ENCODE measurements at regions of chr9 and their contacts with region 1.

Region 1: GRCh38 chr9:125650271-125650737 is 56.7 kb downstream of the MAPKAP1 start:
- DNase-seq: no peak
- H3K4me3 Mint-ChIP-seq: peak overlapping the region; percentile 3
- H3K27ac Mint-ChIP-seq: peak overlapping the region; percentile 64
- H3K4me1 Mint-ChIP-seq: peaks cover 55% of the 10 kb centered on the region
- H3K27me3 Mint-ChIP-seq: no peaks in the 10 kb centered on the region

Region 2: DNA sequence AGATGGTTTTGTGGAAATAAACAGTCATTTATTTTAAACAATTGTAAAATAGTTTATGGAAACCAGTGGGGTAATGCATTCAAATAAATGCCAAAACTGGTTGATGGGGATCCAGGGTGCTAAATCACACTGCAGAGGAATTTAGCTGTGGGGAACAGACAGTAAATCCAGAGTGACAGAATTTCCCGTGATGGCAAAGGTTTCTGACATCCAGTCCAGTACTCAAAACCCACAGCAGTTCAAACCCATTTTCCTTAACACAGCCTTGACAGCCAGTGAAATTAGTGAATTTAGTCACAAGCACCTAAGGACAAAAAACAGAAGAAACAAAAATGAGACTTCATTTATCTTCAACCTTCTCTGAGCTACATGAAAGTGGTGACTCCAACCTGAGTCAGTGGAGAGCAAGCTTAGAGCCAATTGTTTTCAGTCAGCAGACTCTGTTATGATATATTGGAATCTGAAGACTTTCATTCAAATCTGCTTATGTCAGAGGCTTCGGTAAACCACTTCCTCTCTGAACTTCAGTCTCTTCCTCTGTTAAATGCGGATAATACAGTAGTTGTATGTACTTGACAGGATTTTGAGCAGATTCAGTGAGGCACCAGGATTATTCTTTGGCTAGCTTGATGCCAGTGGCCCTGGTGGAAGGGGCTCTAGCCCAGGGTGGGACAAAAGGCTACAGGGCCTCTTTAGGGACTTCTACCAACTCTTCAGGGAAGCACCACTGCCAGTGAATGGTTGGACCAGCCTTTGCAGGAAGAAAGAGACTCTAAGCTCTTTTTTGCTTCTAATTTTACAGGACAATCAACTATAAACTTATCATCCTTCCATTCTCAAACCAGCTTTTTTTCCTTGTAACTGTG is 128.6 kb before region 1 on chr9:
- intact Hi-C with region 1: loop called (anchors 1 kb)
- DNase-seq: peak; percentile 24
- H3K4me3 Mint-ChIP-seq: peak overlapping the region; percentile 51
- H3K27ac Mint-ChIP-seq: peak overlapping the region; percentile 91
- H3K4me1 Mint-ChIP-seq: peaks cover 50% of the 10 kb centered on the region
- H3K27me3 Mint-ChIP-seq: no peaks in the 10 kb centered on the region

Region 3: DNA sequence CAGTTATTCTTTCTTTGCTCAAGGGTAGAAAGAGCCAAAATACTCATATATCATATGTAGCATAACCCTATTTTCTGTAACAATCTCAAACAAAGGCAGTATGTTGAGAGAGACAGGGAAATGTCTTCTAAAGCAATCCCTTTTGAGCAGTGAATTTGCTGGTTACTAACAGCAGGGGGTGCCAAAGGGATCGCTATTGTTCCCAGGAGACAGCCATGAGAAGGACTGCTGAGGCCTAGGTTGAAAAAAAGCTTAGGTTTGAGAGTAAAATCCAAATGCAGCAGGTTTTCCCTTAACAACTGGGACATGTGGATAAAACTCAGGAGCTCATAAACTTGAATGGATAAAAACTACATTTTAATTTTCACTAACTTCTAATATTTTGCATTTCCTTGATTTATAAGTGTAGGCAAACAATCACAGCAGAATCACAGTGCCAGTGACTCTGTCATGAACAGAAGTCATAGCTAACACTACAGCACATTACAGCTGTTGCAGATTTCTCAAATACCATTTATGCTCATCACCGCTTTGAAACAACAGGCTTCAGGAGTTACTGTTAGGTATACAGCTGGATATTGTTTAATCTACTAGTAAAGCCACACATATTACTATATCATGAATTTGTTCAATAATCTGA is 91.7 kb before region 1 on chr9:
- intact Hi-C with region 1: loop called (anchors 5 kb)
- DNase-seq: peak; percentile 36
- H3K4me3 Mint-ChIP-seq: no peak overlapping the region
- H3K27ac Mint-ChIP-seq: no peak overlapping the region
- H3K4me1 Mint-ChIP-seq: peaks cover 27% of the 10 kb centered on the region
- H3K27me3 Mint-ChIP-seq: no peaks in the 10 kb centered on the region

Region 4: DNA sequence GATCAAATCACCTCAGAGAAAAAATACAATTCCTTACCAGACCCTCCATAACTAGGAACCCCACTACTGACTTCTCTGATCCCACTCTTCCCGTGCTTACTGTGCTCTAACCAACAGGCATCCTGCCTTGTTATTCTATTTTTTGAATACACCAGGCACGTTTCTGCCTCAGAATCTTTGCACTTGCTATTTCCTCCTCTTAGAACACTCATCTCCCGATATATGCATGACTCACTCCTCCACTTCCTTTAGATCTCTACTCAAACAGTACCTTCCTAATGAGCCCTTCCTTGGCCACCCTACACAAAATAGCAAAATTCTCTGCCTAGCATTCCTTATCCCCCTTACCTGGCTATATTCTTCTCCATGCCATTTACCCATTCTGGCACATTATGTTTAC is 12.8 kb after region 1 on chr9:
- intact Hi-C with region 1: loop called (anchors 1 kb)
- DNase-seq: no peak
- H3K4me3 Mint-ChIP-seq: no peak overlapping the region
- H3K27ac Mint-ChIP-seq: no peak overlapping the region
- H3K4me1 Mint-ChIP-seq: peaks cover 11% of the 10 kb centered on the region
- H3K27me3 Mint-ChIP-seq: no peaks in the 10 kb centered on the region

Region 5: GRCh38 chr9:125706661-125707471 is 56.6 kb after region 1 on chr9 and contains the start of gene MAPKAP1:
- intact Hi-C with region 1: loop called (anchors 2 kb)
- DNase-seq: peak; percentile 89
- H3K4me3 Mint-ChIP-seq: peak within 1 kb of the TSS; percentile 85
- H3K27ac Mint-ChIP-seq: peak within 1 kb of the TSS; percentile 78
- H3K4me1 Mint-ChIP-seq: peaks cover 29% of the 10 kb centered on the region
- H3K27me3 Mint-ChIP-seq: no peaks in the 10 kb centered on the region
- total RNA-seq, gene MAPKAP1: 77.9 and 83.8 TPM in 2 replicates

Region 6: GRCh38 chr9:125746017-125746773 is 95.9 kb after region 1 on chr9:
- intact Hi-C with region 1: loop called (anchors 5 kb)
- DNase-seq: peak; percentile 88
- H3K4me3 Mint-ChIP-seq: peak overlapping the region; percentile 80
- H3K27ac Mint-ChIP-seq: peak overlapping the region; percentile 95
- H3K4me1 Mint-ChIP-seq: peaks cover 40% of the 10 kb centered on the region
- H3K27me3 Mint-ChIP-seq: peaks cover 28% of the 10 kb centered on the region

Region 7: GRCh38 chr9:125922854-125923253 is 272.6 kb after region 1 on chr9:
- intact Hi-C with region 1: no loop called
- DNase-seq: no peak
- H3K4me3 Mint-ChIP-seq: no peak overlapping the region
- H3K27ac Mint-ChIP-seq: no peak overlapping the region
- H3K4me1 Mint-ChIP-seq: no peaks in the 10 kb centered on the region
- H3K27me3 Mint-ChIP-seq: no peaks in the 10 kb centered on the region

Region 8: GRCh38 chr9:126411225-126411947 is 761.1 kb after region 1 on chr9:
- intact Hi-C with region 1: loop called (anchors 5 kb)
- DNase-seq: peak; percentile 46
- H3K4me3 Mint-ChIP-seq: peak overlapping the region; percentile 35
- H3K27ac Mint-ChIP-seq: peak overlapping the region; percentile 58
- H3K4me1 Mint-ChIP-seq: peaks cover 32% of the 10 kb centered on the region
- H3K27me3 Mint-ChIP-seq: peaks cover 13% of the 10 kb centered on the region